Activated naive CD4-positive, alpha-beta T cell treated with anti-CD3 and anti-CD28 coated beads for 36 hours (primary cell): ENCODE measurements at regions of chr11 and their contacts with region 1.

Region 1: GRCh38 chr11:48055292-48056132 is 75.2 kb downstream of the PTPRJ start:
- DNase-seq: peak; percentile 88
- H3K4me3 Mint-ChIP-seq: peak overlapping the region; percentile 54
- H3K27ac Mint-ChIP-seq: peak overlapping the region; percentile 76
- H3K4me1 Mint-ChIP-seq: peaks cover 84% of the 10 kb centered on the region
- H3K27me3 Mint-ChIP-seq: no peaks in the 10 kb centered on the region

Region 2: DNA sequence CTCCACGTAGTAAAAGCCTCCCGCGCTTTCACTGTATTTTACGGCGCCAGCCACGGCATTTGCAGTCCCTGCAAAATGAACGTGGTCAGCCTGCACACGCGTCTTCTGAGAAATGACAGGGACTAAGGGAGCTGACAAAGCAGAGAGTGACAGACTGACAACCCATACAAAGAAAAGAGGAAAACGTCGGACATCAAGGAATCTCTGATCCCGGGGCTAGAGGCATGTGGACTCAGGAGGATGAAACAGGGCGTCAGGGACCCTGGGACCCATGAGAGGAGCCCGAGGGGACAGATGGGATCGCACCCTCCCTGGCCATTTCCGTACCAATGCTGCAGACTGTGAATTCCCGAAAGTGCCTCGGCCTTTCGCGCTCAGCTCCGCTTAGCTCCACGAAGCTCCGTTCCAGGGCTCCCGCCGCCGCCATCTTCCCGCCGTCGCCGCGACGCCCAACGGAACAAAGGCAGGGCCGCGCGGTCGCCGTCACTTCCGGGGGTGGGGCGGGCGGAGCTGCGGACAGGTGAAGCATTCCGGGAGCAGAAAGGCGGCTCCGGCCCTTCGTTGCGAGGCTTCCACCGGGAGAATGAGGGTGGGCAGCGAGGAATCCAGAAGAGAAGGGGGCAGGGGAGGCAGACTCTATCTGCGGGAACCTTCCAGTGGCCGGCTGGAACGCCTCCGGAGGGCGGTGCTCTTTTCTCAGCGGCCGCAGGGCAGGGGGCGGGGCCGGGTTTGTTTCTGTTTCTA is 207.4 kb before region 1 on chr11 and contains the start of gene NUP160:
- CTCF ChIA-PET with region 1: no interaction called
- intact Hi-C with region 1: no loop called
- DNase-seq: peak; percentile 92
- H3K4me3 Mint-ChIP-seq: peak within 1 kb of the TSS; percentile 93
- H3K27ac Mint-ChIP-seq: peak within 1 kb of the TSS; percentile 92
- H3K4me1 Mint-ChIP-seq: peaks cover 47% of the 10 kb centered on the region
- H3K27me3 Mint-ChIP-seq: no peaks in the 10 kb centered on the region
- total RNA-seq, gene NUP160: 64.7 to 64.8 TPM

Region 3: DNA sequence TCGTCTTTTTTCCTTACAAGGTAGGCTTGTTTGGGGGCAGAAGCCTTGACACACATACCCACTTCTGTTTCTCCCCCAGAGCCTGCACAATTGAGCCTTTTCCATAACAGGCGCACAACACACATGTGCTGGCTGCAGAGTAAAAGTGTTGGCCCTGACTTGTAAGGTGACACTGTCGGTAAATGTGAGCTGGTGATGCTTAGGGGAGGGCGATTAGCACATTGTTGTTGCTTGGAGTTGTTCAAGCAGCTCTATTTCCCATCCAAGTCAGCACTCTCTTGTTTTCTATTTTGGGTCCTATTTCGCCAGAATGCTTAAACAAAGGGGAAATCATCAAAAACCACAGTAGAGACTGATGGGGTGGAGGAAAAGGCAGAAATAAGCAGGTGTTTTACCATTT is 127.1 kb before region 1 on chr11:
- CTCF ChIA-PET with region 1: interaction called, 14 read pairs
- intact Hi-C with region 1: no loop called
- DNase-seq: no peak
- H3K4me3 Mint-ChIP-seq: no peak overlapping the region
- H3K27ac Mint-ChIP-seq: no peak overlapping the region
- H3K4me1 Mint-ChIP-seq: peaks cover 28% of the 10 kb centered on the region
- H3K27me3 Mint-ChIP-seq: no peaks in the 10 kb centered on the region

Region 4: GRCh38 chr11:47981667-47982404 is 73.7 kb before region 1 on chr11:
- CTCF ChIA-PET with region 1: interaction called, 5 read pairs
- intact Hi-C with region 1: loop called (anchors 1 kb)
- DNase-seq: peak; percentile 38
- H3K4me3 Mint-ChIP-seq: peak overlapping the region; percentile 82
- H3K27ac Mint-ChIP-seq: peak overlapping the region; percentile 42
- H3K4me1 Mint-ChIP-seq: peaks cover 39% of the 10 kb centered on the region
- H3K27me3 Mint-ChIP-seq: peaks cover 3% of the 10 kb centered on the region

Region 5: DNA sequence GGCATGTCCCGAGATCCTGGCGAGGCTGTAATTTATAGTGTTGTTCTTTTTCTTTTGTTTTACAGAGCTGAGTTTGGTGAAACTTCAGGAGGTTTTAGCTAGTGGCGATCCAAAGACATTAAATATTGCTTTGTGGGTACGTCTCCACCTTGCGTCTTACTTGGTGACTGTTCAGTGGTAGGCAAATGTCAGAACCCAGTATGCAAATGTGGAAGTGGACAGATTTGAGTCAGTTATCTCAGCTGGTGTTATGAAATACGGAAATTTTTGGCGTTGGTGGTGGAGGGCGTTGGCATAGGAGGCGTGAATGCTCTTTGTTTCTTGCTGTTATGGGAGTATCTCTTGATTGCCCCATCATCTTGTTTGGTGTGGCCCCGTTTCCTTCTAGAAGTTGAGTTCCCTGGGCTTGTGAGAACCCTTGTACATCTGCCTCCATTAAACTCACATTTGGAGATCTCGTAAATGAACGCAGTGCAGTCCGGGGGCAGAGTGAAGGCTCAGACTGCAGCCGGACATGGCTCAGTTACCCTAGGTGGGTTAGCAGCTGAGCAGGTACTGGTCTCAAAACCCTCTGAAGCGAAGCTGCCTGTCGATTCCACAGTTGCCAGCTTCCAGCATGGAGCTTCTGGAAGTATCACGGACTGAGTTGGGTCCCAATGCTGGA is 35.3 kb before region 1 on chr11:
- CTCF ChIA-PET with region 1: interaction called, 3 read pairs
- intact Hi-C with region 1: loop called (anchors 1 kb)
- DNase-seq: peak; percentile 61
- H3K4me3 Mint-ChIP-seq: no peak overlapping the region
- H3K27ac Mint-ChIP-seq: peak overlapping the region; percentile 61
- H3K4me1 Mint-ChIP-seq: peaks cover 64% of the 10 kb centered on the region
- H3K27me3 Mint-ChIP-seq: no peaks in the 10 kb centered on the region

Region 6: GRCh38 chr11:48043111-48043990 is 12.2 kb before region 1 on chr11:
- CTCF ChIA-PET with region 1: interaction called, 8 read pairs
- intact Hi-C with region 1: loop called (anchors 1 kb)
- DNase-seq: peak; percentile 57
- H3K4me3 Mint-ChIP-seq: peak overlapping the region; percentile 7
- H3K27ac Mint-ChIP-seq: peak overlapping the region; percentile 60
- H3K4me1 Mint-ChIP-seq: peaks cover 58% of the 10 kb centered on the region
- H3K27me3 Mint-ChIP-seq: no peaks in the 10 kb centered on the region

Region 7: GRCh38 chr11:48097041-48097476 is 41.5 kb after region 1 on chr11:
- CTCF ChIA-PET with region 1: no interaction called
- intact Hi-C with region 1: loop called (anchors 2 kb)
- DNase-seq: no peak
- H3K4me3 Mint-ChIP-seq: no peak overlapping the region
- H3K27ac Mint-ChIP-seq: peak overlapping the region; percentile 69
- H3K4me1 Mint-ChIP-seq: peaks cover 61% of the 10 kb centered on the region
- H3K27me3 Mint-ChIP-seq: no peaks in the 10 kb centered on the region